Gastrocnemius medialis (tissue), 4 donors: ENCODE measurements at regions of chrX and their contacts with region 1.

Region 1: GRCh38 chrX:101390664-101391525 is at the start of gene RPL36A:
- DNase-seq: peak; percentile 71 to 82
- ATAC-seq: peak; percentile 99
- H3K4me3 ChIP-seq: peak within 1 kb of the TSS; percentile 65 to 73 (median 70)
- H3K27ac ChIP-seq: peak within 1 kb of the TSS; percentile 78 to 89 (median 81)
- H3K4me1 ChIP-seq: no peaks in the 10 kb centered on the region
- H3K27me3 ChIP-seq: no peaks in the 10 kb centered on the region
- CTCF ChIP-seq: peak; percentile 43 to 75 (median 55)
- POLR2A ChIP-seq: peak; percentile 86 to 87
- total RNA-seq, gene RPL36A: 627 to 1,470 (median 1,100) TPM

Region 2: GRCh38 chrX:101348452-101349192 is 42.3 kb before region 1 on chrX and contains the start of gene TIMM8A:
- in situ Hi-C with region 1: no loop called
- intact Hi-C with region 1: loop called (anchors 1 kb)
- DNase-seq: peak; percentile 75
- ATAC-seq: peak; percentile 92 to 96
- H3K4me3 ChIP-seq: peak within 1 kb of the TSS; percentile 71 to 87 (median 72)
- H3K27ac ChIP-seq: peak within 1 kb of the TSS; percentile 85 to 97 (median 91)
- H3K4me1 ChIP-seq: peaks cover 0 to 3% of the 10 kb centered on the region in 2 donors
- H3K27me3 ChIP-seq: no peaks in the 10 kb centered on the region
- CTCF ChIP-seq: no peak
- POLR2A ChIP-seq: peak; percentile 53 to 65
- total RNA-seq, gene TIMM8A: 1.9 to 9.5 (median 4.9) TPM